HepG2 (cell line): ENCODE measurements at regions of chr3 and their contacts with region 1.

Region 1: GRCh38 chr3:196292291-196292923 is 4.9 kb upstream of the PCYT1A start:
- DNase-seq: peak; percentile 27
- ATAC-seq: peak; percentile 74
- H3K4me3 ChIP-seq: no peak overlapping the region
- H3K27ac ChIP-seq: no peak overlapping the region
- H3K4me1 ChIP-seq: peaks cover 13% of the 10 kb centered on the region
- H3K27me3 ChIP-seq: no peaks in the 10 kb centered on the region; a peak in 2 of 5 replicates
- CTCF ChIP-seq: peak; percentile 57
- EP300 ChIP-seq: no peak
- POLR2A ChIP-seq: no peak
- RAD21 ChIP-seq: peak; percentile 60; the same call in 1 of the 2 replicates

Region 2: DNA sequence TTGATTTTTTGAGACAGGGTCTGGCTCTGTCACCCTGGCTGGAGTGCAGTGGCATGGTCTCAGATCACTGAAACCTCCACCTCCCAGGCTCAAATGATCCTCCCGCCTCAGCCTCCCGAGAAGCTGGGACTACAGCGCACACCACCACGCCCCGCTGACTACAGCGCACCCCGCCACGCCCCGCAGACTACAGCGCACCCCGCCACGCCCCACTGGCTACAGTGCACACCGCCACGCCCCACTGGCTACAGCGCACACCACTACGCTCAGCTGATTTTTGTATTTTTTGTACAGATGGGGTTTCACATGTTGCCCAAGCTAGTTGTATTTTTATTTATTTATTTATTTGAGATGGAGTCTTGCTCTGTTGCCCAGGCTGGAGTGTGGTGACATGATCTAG is 40.5 kb before region 1 on chr3:
- CTCF ChIA-PET with region 1: interaction called, 6 read pairs
- POLR2A ChIA-PET with region 1: no interaction called
- in situ Hi-C with region 1: no loop called
- intact Hi-C with region 1: loop called (anchors 2 kb)
- DNase-seq: no peak
- ATAC-seq: no peak
- H3K4me3 ChIP-seq: no peak overlapping the region
- H3K27ac ChIP-seq: no peak overlapping the region
- H3K4me1 ChIP-seq: peaks cover 17% of the 10 kb centered on the region
- H3K27me3 ChIP-seq: no peaks in the 10 kb centered on the region
- CTCF ChIP-seq: no peak
- EP300 ChIP-seq: no peak
- POLR2A ChIP-seq: no peak
- RAD21 ChIP-seq: no peak

Region 3: GRCh38 chr3:196365736-196366135 is 73.3 kb after region 1 on chr3:
- CTCF ChIA-PET with region 1: no interaction called
- POLR2A ChIA-PET with region 1: no interaction called
- in situ Hi-C with region 1: no loop called
- intact Hi-C with region 1: no loop called
- DNase-seq: no peak
- ATAC-seq: no peak
- H3K4me3 ChIP-seq: no peak overlapping the region
- H3K27ac ChIP-seq: no peak overlapping the region
- H3K4me1 ChIP-seq: no peaks in the 10 kb centered on the region
- H3K27me3 ChIP-seq: no peaks in the 10 kb centered on the region
- CTCF ChIP-seq: no peak
- EP300 ChIP-seq: no peak
- POLR2A ChIP-seq: no peak
- RAD21 ChIP-seq: no peak

Region 4: GRCh38 chr3:196378146-196378841 is 85.9 kb after region 1 on chr3:
- CTCF ChIA-PET with region 1: no interaction called
- POLR2A ChIA-PET with region 1: no interaction called
- in situ Hi-C with region 1: no loop called
- intact Hi-C with region 1: no loop called
- DNase-seq: no peak
- ATAC-seq: no peak
- H3K4me3 ChIP-seq: no peak overlapping the region
- H3K27ac ChIP-seq: no peak overlapping the region
- H3K4me1 ChIP-seq: no peaks in the 10 kb centered on the region
- H3K27me3 ChIP-seq: no peaks in the 10 kb centered on the region
- CTCF ChIP-seq: no peak
- EP300 ChIP-seq: no peak
- POLR2A ChIP-seq: no peak
- RAD21 ChIP-seq: no peak

Region 5: GRCh38 chr3:196502775-196503195 is 210.4 kb after region 1 on chr3:
- CTCF ChIA-PET with region 1: no interaction called
- POLR2A ChIA-PET with region 1: no interaction called
- in situ Hi-C with region 1: no loop called
- intact Hi-C with region 1: no loop called
- DNase-seq: peak; percentile 30
- ATAC-seq: peak; percentile 26
- H3K4me3 ChIP-seq: peak overlapping the region; percentile 90 to 99 (median 99)
- H3K27ac ChIP-seq: peak overlapping the region; percentile 90
- H3K4me1 ChIP-seq: peaks cover 50% of the 10 kb centered on the region
- H3K27me3 ChIP-seq: no peaks in the 10 kb centered on the region; a peak in 1 of 5 replicates
- CTCF ChIP-seq: no peak
- EP300 ChIP-seq: no peak
- POLR2A ChIP-seq: no peak
- RAD21 ChIP-seq: no peak